Posterior cingulate gyrus (tissue), 11 donors: ENCODE measurements at regions of chr1 and their contacts with region 1.

Region 1: GRCh38 chr1:157168015-157168414 is 29.8 kb upstream of the ETV3 start:
- DNase-seq: no peak

Region 2: GRCh38 chr1:157193702-157194391 is 25.8 kb after region 1 on chr1:
- intact Hi-C with region 1: loop called (anchors 2 kb)
- DNase-seq: peak in 9 of 10 donors; percentile 37 to 92 (median 68)

Region 3: DNA sequence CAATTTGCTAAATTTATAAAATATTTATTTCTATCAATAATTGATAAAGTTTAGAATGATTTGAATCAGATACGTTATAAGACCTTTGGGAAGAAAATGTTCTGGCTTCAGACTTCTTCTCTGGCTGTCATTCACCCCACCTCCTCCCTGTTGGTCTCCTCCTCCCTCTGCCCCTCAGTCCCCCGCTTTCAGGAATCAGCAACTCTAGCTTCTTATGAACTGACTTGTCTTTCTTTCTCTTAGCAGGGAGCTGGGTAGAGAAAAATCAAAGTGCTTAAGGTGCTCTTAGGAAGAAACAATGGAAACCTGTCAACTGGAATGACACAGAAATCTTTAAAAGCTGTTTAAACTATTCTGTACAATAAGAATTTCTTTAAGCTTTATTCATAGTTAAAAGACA is 41.5 kb after region 1 on chr1:
- intact Hi-C with region 1: no loop called
- DNase-seq: no peak